ENCODE measurements at regions of chr15 and their contacts with region 1.

Region 1: DNA sequence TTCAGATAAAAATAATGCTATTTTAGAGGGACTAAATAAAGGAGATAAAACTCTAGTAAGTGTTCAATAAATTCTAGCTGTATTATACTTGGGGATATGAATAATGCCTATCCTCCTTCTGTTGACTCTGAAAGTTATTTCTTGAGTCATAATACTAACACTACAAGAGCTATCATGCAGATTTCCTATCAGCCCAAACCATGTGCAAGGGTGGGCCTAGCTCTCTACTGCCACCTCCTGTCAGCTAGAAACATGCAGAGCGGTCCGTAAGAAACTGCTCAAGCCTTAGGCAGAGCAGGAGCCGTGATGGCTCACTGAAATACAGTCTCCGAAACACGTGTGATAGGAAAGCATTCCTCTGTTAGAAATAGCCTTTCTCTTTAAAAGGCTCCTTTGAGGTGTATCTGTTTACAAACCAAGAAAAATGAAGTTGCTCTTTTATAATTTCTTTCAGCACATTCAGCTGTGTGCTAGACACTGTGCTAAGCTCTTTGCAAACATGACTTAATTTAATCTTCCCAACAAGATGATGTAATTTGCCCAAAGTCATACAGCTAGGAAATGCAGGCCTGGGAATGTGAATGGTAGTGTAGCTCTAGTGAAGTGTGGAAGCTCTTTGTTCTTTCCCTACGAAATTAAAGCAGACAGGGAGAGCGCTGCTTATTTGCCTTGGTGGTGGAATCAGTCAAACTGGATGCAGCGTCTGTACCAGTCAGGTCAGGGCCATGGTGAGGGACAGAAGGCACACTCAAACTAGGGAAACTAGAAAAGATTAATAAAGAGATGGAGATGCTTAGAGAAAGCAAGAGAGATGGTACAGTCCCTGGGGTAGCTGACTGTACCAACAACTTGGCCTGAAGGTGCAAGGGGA is 43.1 kb downstream of the MTHFS start:
- DNase-seq: peak; percentile 60
- H3K4me3 ChIP-seq: peak overlapping the region in 1 of 2 experiments; percentile 27; a peak in 1 of 4 replicates
- H3K27ac ChIP-seq: peak overlapping the region in 1 of 2 experiments; percentile 79; a peak in 2 of 4 replicates
- H3K4me1 ChIP-seq: peaks cover 0 to 6% of the 10 kb centered on the region in 2 experiments; a peak in 2 of 4 replicates
- H3K27me3 ChIP-seq: no peaks in the 10 kb centered on the region
- CTCF ChIP-seq: peak; percentile 98
- EP300 ChIP-seq: no peak
- RAD21 ChIP-seq: peak; percentile 94

Region 2: GRCh38 chr15:79051029-79051428 is 802.7 kb before region 1 on chr15:
- CTCF ChIA-PET with region 1: no interaction called
- POLR2A ChIA-PET with region 1: no interaction called
- DNase-seq: no peak
- H3K4me3 ChIP-seq: no peak overlapping the region
- H3K27ac ChIP-seq: no peak overlapping the region
- H3K4me1 ChIP-seq: no peaks in the 10 kb centered on the region
- H3K27me3 ChIP-seq: peaks cover 5% of the 10 kb centered on the region; the same call in 1 of the 2 replicates
- CTCF ChIP-seq: no peak
- EP300 ChIP-seq: no peak
- RAD21 ChIP-seq: no peak

Region 3: GRCh38 chr15:79431636-79432344 is 421.9 kb before region 1 on chr15 and contains the start of gene MINAR1:
- CTCF ChIA-PET with region 1: interaction called, 13 read pairs
- POLR2A ChIA-PET with region 1: no interaction called
- DNase-seq: peak; percentile 84
- H3K4me3 ChIP-seq: peak within 1 kb of the TSS; percentile 48 to 68
- H3K27ac ChIP-seq: no peak within 1 kb of the TSS
- H3K4me1 ChIP-seq: peaks cover 0 to 7% of the 10 kb centered on the region in 2 experiments; a peak in 1 of 4 replicates
- H3K27me3 ChIP-seq: 0 out of 2 replicates have a peak, but pooled peaks cover 7% of the 10 kb centered on the region
- CTCF ChIP-seq: peak; percentile 42
- EP300 ChIP-seq: no peak
- RAD21 ChIP-seq: peak; percentile 35; the same call in 1 of the 2 replicates
- polyA plus RNA-seq, gene MINAR1: 0.35 and 0.39 TPM in 2 replicates

Region 4: GRCh38 chr15:79769069-79769481 is 84.6 kb before region 1 on chr15:
- CTCF ChIA-PET with region 1: interaction called, 13 read pairs
- POLR2A ChIA-PET with region 1: no interaction called
- DNase-seq: peak; percentile 33
- H3K4me3 ChIP-seq: no peak overlapping the region
- H3K27ac ChIP-seq: no peak overlapping the region
- H3K4me1 ChIP-seq: no peaks in the 10 kb centered on the region
- H3K27me3 ChIP-seq: no peaks in the 10 kb centered on the region
- CTCF ChIP-seq: peak; percentile 30; the same call in 1 of the 2 replicates
- EP300 ChIP-seq: no peak
- RAD21 ChIP-seq: peak; percentile 66

Region 5: GRCh38 chr15:79834495-79834894 is 19.2 kb before region 1 on chr15:
- CTCF ChIA-PET with region 1: interaction called, 14 read pairs
- POLR2A ChIA-PET with region 1: no interaction called
- DNase-seq: no peak
- H3K4me3 ChIP-seq: no peak overlapping the region
- H3K27ac ChIP-seq: no peak overlapping the region
- H3K4me1 ChIP-seq: no peaks in the 10 kb centered on the region
- H3K27me3 ChIP-seq: no peaks in the 10 kb centered on the region
- CTCF ChIP-seq: no peak
- EP300 ChIP-seq: no peak
- RAD21 ChIP-seq: no peak

Region 6: DNA sequence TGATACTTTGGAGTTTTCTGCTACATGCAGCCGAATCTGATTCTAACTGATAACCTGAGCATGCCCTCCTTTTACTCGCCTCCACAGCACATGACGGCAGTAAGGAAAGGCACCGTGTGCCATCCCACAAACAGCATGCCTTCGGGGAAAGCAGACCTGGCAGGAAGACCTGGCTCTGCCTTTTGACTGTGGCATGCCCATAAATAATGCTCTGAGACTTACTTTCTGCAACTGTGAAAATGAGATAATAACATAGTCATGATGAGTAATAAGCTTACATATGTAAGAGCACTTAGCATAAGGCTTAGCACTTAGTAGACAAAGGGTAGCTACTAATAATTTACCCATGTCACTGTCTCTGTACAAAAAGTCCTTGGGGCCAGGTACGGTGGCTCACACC is 10.2 kb after region 1 on chr15:
- CTCF ChIA-PET with region 1: interaction called, 18 read pairs
- POLR2A ChIA-PET with region 1: no interaction called
- DNase-seq: no peak
- H3K4me3 ChIP-seq: no peak overlapping the region
- H3K27ac ChIP-seq: no peak overlapping the region
- H3K4me1 ChIP-seq: no peaks in the 10 kb centered on the region; a peak in 2 of 4 replicates
- H3K27me3 ChIP-seq: no peaks in the 10 kb centered on the region
- CTCF ChIP-seq: no peak
- EP300 ChIP-seq: no peak
- RAD21 ChIP-seq: no peak

Region 7: GRCh38 chr15:79872358-79873017 is 18.8 kb after region 1 on chr15:
- CTCF ChIA-PET with region 1: interaction called, 13 read pairs
- POLR2A ChIA-PET with region 1: no interaction called
- DNase-seq: no peak
- H3K4me3 ChIP-seq: no peak overlapping the region
- H3K27ac ChIP-seq: no peak overlapping the region
- H3K4me1 ChIP-seq: no peaks in the 10 kb centered on the region
- H3K27me3 ChIP-seq: no peaks in the 10 kb centered on the region
- CTCF ChIP-seq: no peak
- EP300 ChIP-seq: no peak
- RAD21 ChIP-seq: no peak

Region 8: DNA sequence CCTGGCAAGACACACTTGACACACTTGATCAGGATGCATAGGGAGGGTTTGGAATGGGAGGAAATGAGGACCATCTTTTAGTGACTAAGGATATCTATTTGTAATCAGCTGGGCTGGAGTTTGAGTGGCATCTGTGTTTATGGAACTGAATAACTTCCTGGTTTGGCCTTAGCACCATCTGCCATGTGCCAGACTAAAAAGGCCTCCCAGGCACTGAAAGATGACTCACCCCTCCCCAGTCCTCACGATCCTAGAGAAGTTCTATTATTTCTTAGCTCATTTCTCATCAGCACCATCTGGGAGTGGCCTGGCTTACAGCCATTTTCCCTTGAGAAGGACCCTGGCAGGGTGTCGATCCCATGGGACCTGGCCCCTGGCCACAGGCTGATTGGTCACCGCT is 422.2 kb after region 1 on chr15:
- CTCF ChIA-PET with region 1: no interaction called
- POLR2A ChIA-PET with region 1: no interaction called
- DNase-seq: no peak
- H3K4me3 ChIP-seq: no peak overlapping the region
- H3K27ac ChIP-seq: no peak overlapping the region
- H3K4me1 ChIP-seq: no peaks in the 10 kb centered on the region
- H3K27me3 ChIP-seq: 0 out of 2 replicates have a peak, but pooled peaks cover under 1% of the 10 kb centered on the region
- CTCF ChIP-seq: no peak
- EP300 ChIP-seq: no peak
- RAD21 ChIP-seq: no peak